CD14-positive monocyte (primary cell): ENCODE measurements at regions of chr3 and their contacts with region 1.

Region 1: DNA sequence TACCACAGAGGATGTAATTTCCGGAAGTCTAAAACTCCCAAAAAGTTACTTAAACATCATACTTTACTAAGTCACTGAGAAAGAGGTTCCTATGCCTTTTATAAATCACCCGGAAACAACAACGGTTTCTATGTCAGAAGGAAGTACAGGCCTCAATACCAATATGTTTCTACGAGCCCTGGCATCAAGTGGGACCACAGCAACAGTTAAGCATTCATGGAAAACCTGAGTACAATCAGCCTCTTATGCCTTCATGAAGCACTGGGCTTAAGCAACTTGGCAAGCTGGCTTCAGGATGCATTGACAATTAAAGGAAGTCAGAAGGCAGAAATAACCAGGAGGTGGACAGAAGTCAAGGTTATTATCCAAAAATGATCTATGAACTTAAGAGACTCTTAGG is 19.1 kb upstream of the B3GNT5 start:
- DNase-seq: peak in 2 of 3 donors; percentile 22 to 32
- H3K4me3 ChIP-seq: no peak overlapping the region
- H3K4me3 Mint-ChIP-seq: no peak overlapping the region
- H3K27ac ChIP-seq: peak overlapping the region in 1 of 2 donors; percentile 30
- H3K27ac Mint-ChIP-seq: peak overlapping the region in 4 of 7 donors; percentile 79 to 87 (median 84)
- H3K4me1 ChIP-seq: peaks cover 6 to 11% of the 10 kb centered on the region in 2 donors
- H3K4me1 Mint-ChIP-seq: peaks cover 5% of the 10 kb centered on the region
- H3K27me3 ChIP-seq: no peaks in the 10 kb centered on the region
- H3K27me3 Mint-ChIP-seq: peaks cover 0 to 1% (median 0%) of the 10 kb centered on the region in 3 donors
- CTCF ChIP-seq: no peak

Region 2: DNA sequence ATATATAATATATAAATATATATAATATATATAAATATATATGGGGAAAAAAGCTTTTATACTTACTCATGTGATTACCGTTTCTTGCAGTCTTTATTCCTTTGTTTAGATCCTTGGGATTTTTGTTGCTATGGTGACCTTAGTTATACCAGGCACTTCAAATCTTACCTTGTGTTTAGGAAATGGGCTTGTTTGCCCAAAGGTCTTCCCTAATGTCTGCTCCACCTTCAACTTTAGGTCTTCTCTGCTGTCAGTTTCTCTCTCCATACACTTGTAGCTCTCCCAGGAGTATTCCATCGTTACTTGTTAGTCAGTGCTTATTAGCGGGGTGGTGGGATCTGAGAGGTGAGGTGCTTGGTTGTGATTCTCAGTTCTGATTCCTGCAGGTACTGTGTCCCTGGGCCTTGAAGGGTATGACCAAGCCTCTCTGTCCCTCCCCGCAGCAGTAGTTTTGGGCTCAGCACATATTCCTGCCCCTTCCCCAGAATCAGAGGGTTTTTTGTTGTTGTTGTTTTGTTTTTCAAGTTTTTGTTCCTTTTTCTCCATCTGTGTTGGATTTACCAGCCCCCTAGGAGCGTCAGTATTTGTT is 61.8 kb before region 1 on chr3:
- intact Hi-C with region 1: no loop called
- DNase-seq: no peak
- H3K4me3 ChIP-seq: no peak overlapping the region
- H3K4me3 Mint-ChIP-seq: no peak overlapping the region
- H3K27ac ChIP-seq: no peak overlapping the region
- H3K27ac Mint-ChIP-seq: no peak overlapping the region
- H3K4me1 ChIP-seq: no peaks in the 10 kb centered on the region
- H3K4me1 Mint-ChIP-seq: no peaks in the 10 kb centered on the region
- H3K27me3 ChIP-seq: peaks cover 0 to 11% of the 10 kb centered on the region in 2 donors
- H3K27me3 Mint-ChIP-seq: peaks cover 10 to 24% (median 14%) of the 10 kb centered on the region in 3 donors
- CTCF ChIP-seq: no peak

Region 3: GRCh38 chr3:183218826-183219225 is 15.1 kb before region 1 on chr3:
- intact Hi-C with region 1: loop called in 1 of 2 experiments (anchors 2 kb)
- DNase-seq: peak; percentile 50 to 63 (median 53)
- H3K4me3 ChIP-seq: no peak overlapping the region
- H3K4me3 Mint-ChIP-seq: peak overlapping the region in 1 of 2 donors; percentile 57
- H3K27ac ChIP-seq: no peak overlapping the region
- H3K27ac Mint-ChIP-seq: peak overlapping the region in 5 of 7 donors; percentile 10 to 82 (median 45)
- H3K4me1 ChIP-seq: peaks cover 15 to 16% of the 10 kb centered on the region in 2 donors
- H3K4me1 Mint-ChIP-seq: peaks cover 24% of the 10 kb centered on the region
- H3K27me3 ChIP-seq: no peaks in the 10 kb centered on the region
- H3K27me3 Mint-ChIP-seq: peaks cover 0 to 7% (median 3%) of the 10 kb centered on the region in 3 donors
- CTCF ChIP-seq: no peak